ENCODE measurements at regions of chr13 and their contacts with region 1.

Region 1: DNA sequence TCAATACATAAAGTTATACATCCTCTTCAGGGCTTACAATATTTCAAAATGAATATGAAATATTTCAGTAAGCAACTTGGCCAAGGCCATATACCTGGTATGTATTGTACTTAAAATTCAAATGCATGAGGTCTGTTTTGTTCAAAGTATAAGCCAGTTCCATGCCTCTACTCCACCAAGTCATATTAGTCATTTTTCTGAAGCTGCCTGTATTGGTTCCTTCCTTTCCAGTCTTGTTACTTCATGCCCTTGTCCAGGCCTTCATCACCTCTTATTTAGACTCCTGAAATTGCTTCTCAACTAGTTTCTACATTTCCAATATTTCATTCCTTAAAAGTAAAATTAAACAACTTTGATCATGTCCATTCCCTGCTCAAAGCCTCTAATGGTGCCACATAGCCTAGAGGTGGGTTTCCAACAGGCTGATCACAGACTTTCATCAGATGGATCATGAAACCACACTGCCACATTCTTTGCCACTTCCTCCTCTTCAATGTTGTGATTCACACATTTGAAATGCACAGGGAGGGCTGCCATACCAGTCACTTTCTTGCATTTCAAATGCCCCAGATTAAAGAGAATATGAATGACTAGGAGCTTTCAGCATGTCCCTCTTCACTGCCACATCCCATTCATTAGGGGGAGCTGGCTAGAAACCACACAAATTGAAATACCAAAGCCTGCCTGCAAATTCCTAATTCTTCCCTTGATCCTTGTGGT is 424.1 kb upstream of the DACH1 start:
- DNase-seq: peak; percentile 83
- H3K4me3 ChIP-seq: no peak overlapping the region
- H3K27ac ChIP-seq: peak overlapping the region; percentile 74
- H3K4me1 ChIP-seq: peaks cover 24% of the 10 kb centered on the region
- H3K27me3 ChIP-seq: no peaks in the 10 kb centered on the region
- CTCF ChIP-seq: peak in 1 of 2 donors; percentile 10

Region 2: GRCh38 chr13:72390909-72391308 is 99.8 kb after region 1 on chr13:
- CTCF ChIA-PET with region 1: no interaction called
- dilution Hi-C with region 1: no loop called
- in situ Hi-C with region 1: no loop called
- intact Hi-C with region 1: loop called (anchors 2 kb)
- DNase-seq: peak; percentile 97
- H3K4me3 ChIP-seq: no peak overlapping the region
- H3K27ac ChIP-seq: no peak overlapping the region
- H3K4me1 ChIP-seq: peaks cover 10% of the 10 kb centered on the region
- H3K27me3 ChIP-seq: no peaks in the 10 kb centered on the region
- CTCF ChIP-seq: no peak

Region 3: GRCh38 chr13:72565893-72566292 is 274.8 kb after region 1 on chr13:
- CTCF ChIA-PET with region 1: no interaction called
- dilution Hi-C with region 1: no loop called
- in situ Hi-C with region 1: no loop called
- intact Hi-C with region 1: loop called (anchors 10 kb)
- DNase-seq: no peak
- H3K4me3 ChIP-seq: no peak overlapping the region
- H3K27ac ChIP-seq: no peak overlapping the region
- H3K4me1 ChIP-seq: no peaks in the 10 kb centered on the region
- H3K27me3 ChIP-seq: no peaks in the 10 kb centered on the region
- CTCF ChIP-seq: peak; percentile 77 to 79

Region 4: DNA sequence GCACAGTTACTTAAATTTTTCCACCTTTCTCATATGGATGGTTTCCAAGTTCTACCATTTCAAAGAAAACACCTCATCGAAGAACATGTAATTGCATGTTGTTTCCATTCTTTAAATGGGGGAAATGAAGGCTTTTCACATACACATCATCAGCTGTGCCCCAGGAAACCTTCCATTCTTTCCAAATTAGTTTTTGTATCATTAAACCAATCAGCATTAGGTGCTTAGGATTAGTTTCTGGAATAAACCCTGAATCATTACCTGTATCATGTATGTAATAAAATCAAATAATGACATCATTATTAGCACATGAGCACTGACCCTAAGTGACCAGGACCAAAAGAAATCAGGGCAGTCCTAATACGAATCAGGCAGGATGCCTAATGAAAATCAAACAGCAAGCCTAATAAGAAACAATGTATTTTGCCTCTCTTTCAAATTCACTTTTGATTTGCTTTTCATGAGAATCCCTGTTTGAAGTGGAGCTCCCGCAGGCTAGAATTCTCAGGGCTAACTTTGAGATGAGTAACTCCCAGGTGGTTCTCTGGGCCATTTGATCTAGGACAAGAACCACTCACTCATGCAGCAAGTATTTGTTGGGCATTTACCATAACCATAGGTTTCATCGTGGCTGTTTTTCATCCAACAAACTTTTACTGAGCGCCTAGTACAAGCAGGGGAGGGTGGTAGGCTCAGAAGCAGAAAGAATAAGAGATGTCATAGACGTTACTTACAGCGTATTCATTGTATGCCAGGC is 347.1 kb after region 1 on chr13:
- CTCF ChIA-PET with region 1: no interaction called
- dilution Hi-C with region 1: no loop called
- in situ Hi-C with region 1: no loop called
- intact Hi-C with region 1: loop called (anchors 5 kb)
- DNase-seq: peak; percentile 92
- H3K4me3 ChIP-seq: peak overlapping the region in 1 of 3 experiments; percentile 14
- H3K27ac ChIP-seq: peak overlapping the region; percentile 98
- H3K4me1 ChIP-seq: peaks cover 23% of the 10 kb centered on the region
- H3K27me3 ChIP-seq: no peaks in the 10 kb centered on the region
- CTCF ChIP-seq: no peak

Measured in mammary epithelial cell (primary cell).